ENCODE measurements at regions of chr6 and their contacts with region 1.

Region 1: GRCh38 chr6:30326526-30327260 is at the start of gene TRIM39:
- DNase-seq: peak; percentile 87 to 88
- H3K4me3 ChIP-seq: peak within 1 kb of the TSS; percentile 78
- H3K4me3 Mint-ChIP-seq: peak within 1 kb of the TSS; percentile 91
- H3K27ac Mint-ChIP-seq: peak within 1 kb of the TSS; percentile 94
- H3K4me1 ChIP-seq: peaks cover 10% of the 10 kb centered on the region
- H3K4me1 Mint-ChIP-seq: peaks cover 25% of the 10 kb centered on the region
- H3K27me3 ChIP-seq: no peaks in the 10 kb centered on the region
- H3K27me3 Mint-ChIP-seq: no peaks in the 10 kb centered on the region
- CTCF ChIP-seq: no peak
- total RNA-seq, gene TRIM39: 12.7 and 14.5 TPM in 2 replicates

Region 2: DNA sequence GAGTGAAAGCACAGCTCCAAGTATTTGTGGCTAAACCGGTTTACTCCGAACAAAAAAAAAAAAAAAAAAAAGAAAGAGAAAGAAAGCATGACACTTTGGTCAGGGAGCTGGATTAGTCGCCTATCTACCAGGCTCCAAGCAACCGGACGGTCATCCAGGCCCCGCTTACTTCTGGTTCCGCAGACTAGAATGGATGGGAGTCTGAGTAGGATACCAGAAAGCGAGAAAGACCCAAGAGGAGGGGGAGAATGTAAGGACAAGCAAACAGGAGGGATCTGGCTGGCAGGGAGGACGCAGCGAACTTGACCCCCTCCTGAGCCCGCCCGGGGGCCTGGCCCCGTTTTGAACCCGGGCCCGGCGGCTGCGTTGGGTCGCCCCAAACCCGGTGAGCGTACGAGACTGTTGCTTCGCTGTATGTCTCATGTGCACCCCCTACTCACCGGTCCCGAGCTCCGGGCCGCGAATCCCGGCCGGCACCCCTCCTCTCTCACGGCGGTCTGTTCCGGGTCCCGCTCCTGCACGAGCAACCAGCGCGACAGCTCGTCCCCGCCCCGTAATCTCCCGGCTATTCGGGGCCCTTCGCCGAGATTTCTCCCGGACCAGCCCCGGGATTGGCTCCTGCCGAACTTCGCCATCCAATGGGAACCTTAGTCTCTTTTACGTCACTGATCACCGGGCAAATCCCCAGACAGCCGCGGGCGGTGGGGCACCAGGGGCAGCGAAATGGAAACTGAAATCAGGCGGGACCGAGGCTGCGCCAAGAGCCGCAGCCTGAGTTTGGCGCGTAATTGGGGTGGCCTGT is 113.6 kb before region 1 on chr6 and contains the start of gene TRIM26:
- CTCF ChIA-PET with region 1: no interaction called
- POLR2A ChIA-PET with region 1: interaction called, 10 read pairs
- intact Hi-C with region 1: loop called (anchors 5 kb)
- DNase-seq: peak; percentile 98
- H3K4me3 ChIP-seq: peak within 1 kb of the TSS; percentile 90
- H3K4me3 Mint-ChIP-seq: peak within 1 kb of the TSS; percentile 93
- H3K27ac Mint-ChIP-seq: peak within 1 kb of the TSS; percentile 97
- H3K4me1 ChIP-seq: peaks cover 29% of the 10 kb centered on the region
- H3K4me1 Mint-ChIP-seq: peaks cover 26% of the 10 kb centered on the region
- H3K27me3 ChIP-seq: no peaks in the 10 kb centered on the region
- H3K27me3 Mint-ChIP-seq: no peaks in the 10 kb centered on the region
- CTCF ChIP-seq: no peak
- total RNA-seq, gene TRIM26: 48.1 and 49.0 TPM in 2 replicates

Region 3: DNA sequence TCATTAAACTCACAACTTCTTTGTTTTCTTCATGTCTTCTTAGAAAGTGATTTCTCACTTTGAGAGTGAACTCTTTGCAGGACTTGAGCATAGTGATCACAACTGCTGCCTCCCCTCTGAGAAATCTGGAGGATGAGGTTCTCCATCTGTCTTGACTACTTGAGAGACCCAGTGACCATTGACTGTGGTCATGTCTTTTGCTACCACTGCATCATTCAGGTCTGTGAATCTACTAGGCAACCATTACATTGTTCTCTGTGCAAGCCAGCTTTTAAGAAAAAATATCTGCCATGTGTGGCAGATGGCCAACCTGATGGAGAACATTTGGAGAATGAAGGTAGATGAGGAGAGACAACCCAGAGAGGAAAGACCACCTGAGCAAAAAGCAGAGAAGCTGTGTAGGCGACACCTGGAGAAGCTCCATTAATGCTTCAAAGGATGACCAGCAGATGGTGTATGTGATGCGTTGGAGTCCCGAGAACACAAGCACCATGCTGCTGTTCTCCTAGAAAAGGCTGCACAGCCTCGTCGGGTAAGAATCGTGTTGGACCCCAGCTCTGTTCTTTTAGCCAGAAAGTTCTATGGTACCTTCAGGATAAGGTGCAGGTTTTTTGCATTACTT is 88.4 kb before region 1 on chr6:
- CTCF ChIA-PET with region 1: no interaction called
- POLR2A ChIA-PET with region 1: interaction called, 3 read pairs
- intact Hi-C with region 1: loop called (anchors 1 kb)
- DNase-seq: peak; percentile 40 to 51
- H3K4me3 ChIP-seq: no peak overlapping the region
- H3K4me3 Mint-ChIP-seq: no peak overlapping the region
- H3K27ac Mint-ChIP-seq: no peak overlapping the region
- H3K4me1 ChIP-seq: no peaks in the 10 kb centered on the region
- H3K4me1 Mint-ChIP-seq: no peaks in the 10 kb centered on the region
- H3K27me3 ChIP-seq: no peaks in the 10 kb centered on the region
- H3K27me3 Mint-ChIP-seq: peaks cover 20% of the 10 kb centered on the region
- CTCF ChIP-seq: peak; percentile 50 to 67

Region 4: GRCh38 chr6:30272017-30272416 is 54.7 kb before region 1 on chr6:
- CTCF ChIA-PET with region 1: no interaction called
- POLR2A ChIA-PET with region 1: interaction called, 12 read pairs
- intact Hi-C with region 1: no loop called
- DNase-seq: no peak
- H3K4me3 ChIP-seq: no peak overlapping the region
- H3K4me3 Mint-ChIP-seq: no peak overlapping the region
- H3K27ac Mint-ChIP-seq: no peak overlapping the region
- H3K4me1 ChIP-seq: no peaks in the 10 kb centered on the region
- H3K4me1 Mint-ChIP-seq: no peaks in the 10 kb centered on the region
- H3K27me3 ChIP-seq: no peaks in the 10 kb centered on the region
- H3K27me3 Mint-ChIP-seq: peaks cover 3% of the 10 kb centered on the region
- CTCF ChIP-seq: no peak

Region 5: DNA sequence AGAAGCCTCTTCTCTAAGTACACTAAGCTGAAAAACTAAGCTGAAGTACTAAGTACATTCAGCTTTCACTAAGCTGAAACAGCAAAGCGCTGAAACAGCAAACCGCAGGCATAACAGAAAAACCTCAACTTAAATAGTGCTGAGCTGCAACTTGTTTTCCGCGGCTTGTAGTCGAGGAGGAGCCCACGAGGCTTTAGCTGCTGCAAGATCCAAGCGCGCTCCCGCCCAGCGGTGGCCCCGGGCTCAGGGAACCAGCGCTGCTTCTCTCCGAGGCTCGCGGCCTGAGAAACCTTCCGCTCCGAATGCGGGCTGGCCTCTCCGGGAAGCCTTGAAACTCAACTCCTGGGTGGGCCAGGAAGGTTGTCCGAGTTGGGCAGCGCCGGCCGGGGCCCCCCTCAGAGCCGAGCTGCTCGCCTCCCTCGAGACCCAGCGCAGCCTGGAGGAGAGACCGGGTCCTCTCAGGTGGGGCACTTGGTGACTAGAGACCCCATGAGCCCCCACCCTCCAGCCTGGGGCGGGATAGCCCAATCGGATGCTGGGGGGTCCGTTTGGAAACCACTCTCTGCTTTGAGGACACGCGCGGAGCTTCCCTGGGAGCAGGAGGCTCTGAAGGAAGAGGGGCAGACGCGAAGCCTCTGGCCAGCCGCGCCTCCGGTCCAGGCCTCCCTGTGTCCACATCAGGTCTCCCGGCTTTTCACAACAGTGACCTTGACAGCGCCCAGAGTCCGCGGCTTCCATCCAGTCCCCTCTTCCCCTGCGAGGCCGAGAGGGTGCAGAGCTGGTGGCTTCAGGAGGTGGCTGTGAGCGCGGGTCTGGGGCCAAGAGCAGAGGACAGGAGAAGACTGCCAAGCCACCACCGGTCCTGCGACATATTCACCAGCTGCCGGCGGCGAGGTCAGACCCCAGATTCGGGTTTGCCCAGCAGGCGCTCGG is 124.5 kb after region 1 on chr6:
- CTCF ChIA-PET with region 1: no interaction called
- POLR2A ChIA-PET with region 1: no interaction called
- intact Hi-C with region 1: no loop called
- DNase-seq: no peak
- H3K4me3 ChIP-seq: no peak overlapping the region
- H3K4me3 Mint-ChIP-seq: no peak overlapping the region
- H3K27ac Mint-ChIP-seq: no peak overlapping the region
- H3K4me1 ChIP-seq: no peaks in the 10 kb centered on the region
- H3K4me1 Mint-ChIP-seq: no peaks in the 10 kb centered on the region
- H3K27me3 ChIP-seq: no peaks in the 10 kb centered on the region; the same call in 1 of the 2 replicates
- H3K27me3 Mint-ChIP-seq: peaks cover 34% of the 10 kb centered on the region
- CTCF ChIP-seq: no peak

Measured in Caco-2 (cell line).